ENCODE measurements at regions of chr1 and their contacts with region 1.

Region 1: DNA sequence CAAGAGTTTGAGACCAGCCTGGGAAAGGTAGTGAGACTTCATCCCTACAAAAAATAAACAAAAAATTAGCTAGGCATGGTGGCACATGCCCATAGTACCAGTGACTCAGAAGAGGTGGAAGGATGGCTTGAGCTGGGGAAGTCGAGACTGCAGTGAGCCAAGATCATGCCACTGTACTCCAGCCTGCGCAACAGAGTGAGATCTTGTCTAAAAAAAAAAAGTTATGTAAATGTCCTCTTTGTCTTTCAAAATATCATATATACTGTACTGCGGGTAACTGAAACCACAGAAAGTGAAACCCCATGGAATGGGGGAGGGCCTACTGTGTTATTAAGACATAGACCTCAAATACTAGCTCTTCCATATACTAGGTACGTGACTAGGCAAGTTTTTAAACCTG is 20.8 kb downstream of the ACADM start:
- DNase-seq: no peak
- ATAC-seq: peak; percentile 87
- H3K4me3 ChIP-seq: no peak overlapping the region
- H3K4me3 Mint-ChIP-seq: no peak overlapping the region
- H3K27ac ChIP-seq: no peak overlapping the region
- H3K27ac Mint-ChIP-seq: peak overlapping the region in 2 of 9 donors; percentile 28 to 41
- H3K4me1 ChIP-seq: no peaks in the 10 kb centered on the region
- H3K4me1 Mint-ChIP-seq: peaks cover 0 to 6% (median 0%) of the 10 kb centered on the region in 7 donors
- H3K27me3 ChIP-seq: no peaks in the 10 kb centered on the region
- H3K27me3 Mint-ChIP-seq: no peaks in the 10 kb centered on the region

Region 2: DNA sequence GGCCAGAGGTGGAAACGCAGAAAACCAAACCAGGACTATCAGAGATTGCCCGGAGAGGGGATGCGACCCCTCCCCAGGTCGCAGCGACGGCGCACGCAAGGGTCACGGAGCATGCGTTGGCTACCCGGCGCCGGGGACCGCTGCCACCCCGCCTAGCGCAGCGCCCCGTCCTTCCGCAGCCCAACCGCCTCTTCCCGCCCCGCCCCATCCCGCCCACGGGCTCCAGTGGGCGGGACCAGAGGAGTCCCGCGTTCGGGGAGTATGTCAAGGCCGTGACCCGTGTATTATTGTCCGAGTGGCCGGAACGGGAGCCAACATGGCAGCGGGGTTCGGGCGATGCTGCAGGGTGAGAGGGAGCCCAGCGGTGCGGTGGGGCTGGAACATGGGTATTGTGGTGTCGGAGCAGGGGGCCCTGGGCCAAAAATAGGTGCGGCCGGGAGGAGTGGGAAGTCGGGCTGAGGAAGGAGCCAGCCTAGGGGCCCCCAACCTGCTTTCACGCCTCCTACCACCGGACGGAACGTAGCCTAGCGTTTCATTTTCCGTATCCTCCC is 20.7 kb before region 1 on chr1 and contains the start of gene ACADM:
- CTCF ChIA-PET with region 1: no interaction called
- POLR2A ChIA-PET with region 1: no interaction called
- intact Hi-C with region 1: loop called in 1 of 2 experiments (anchors 2 kb)
- DNase-seq: peak; percentile 68 to 93 (median 79)
- ATAC-seq: peak; percentile 98
- H3K4me3 ChIP-seq: peak within 1 kb of the TSS; percentile 92
- H3K4me3 Mint-ChIP-seq: peak within 1 kb of the TSS; percentile 94 to 100 (median 98)
- H3K27ac ChIP-seq: peak within 1 kb of the TSS; percentile 89
- H3K27ac Mint-ChIP-seq: peak within 1 kb of the TSS; percentile 92 to 99 (median 97)
- H3K4me1 ChIP-seq: peaks cover 5 to 12% of the 10 kb centered on the region in 2 donors
- H3K4me1 Mint-ChIP-seq: peaks cover 29 to 75% (median 64%) of the 10 kb centered on the region in 7 donors
- H3K27me3 ChIP-seq: no peaks in the 10 kb centered on the region
- H3K27me3 Mint-ChIP-seq: peaks cover 0 to 2% (median 0%) of the 10 kb centered on the region in 5 donors
- total RNA-seq, gene ACADM: 11.1 to 36.4 (median 32.9) TPM

Region 3: GRCh38 chr1:75733661-75734060 is 11.6 kb before region 1 on chr1:
- CTCF ChIA-PET with region 1: no interaction called
- POLR2A ChIA-PET with region 1: no interaction called
- intact Hi-C with region 1: loop called in 1 of 2 experiments (anchors 1 kb)
- DNase-seq: no peak
- ATAC-seq: no peak
- H3K4me3 ChIP-seq: no peak overlapping the region
- H3K4me3 Mint-ChIP-seq: no peak overlapping the region
- H3K27ac ChIP-seq: no peak overlapping the region
- H3K27ac Mint-ChIP-seq: peak overlapping the region in 1 of 9 donors; percentile 9
- H3K4me1 ChIP-seq: no peaks in the 10 kb centered on the region
- H3K4me1 Mint-ChIP-seq: peaks cover 0 to 9% (median 4%) of the 10 kb centered on the region in 7 donors
- H3K27me3 ChIP-seq: no peaks in the 10 kb centered on the region
- H3K27me3 Mint-ChIP-seq: no peaks in the 10 kb centered on the region

Region 4: DNA sequence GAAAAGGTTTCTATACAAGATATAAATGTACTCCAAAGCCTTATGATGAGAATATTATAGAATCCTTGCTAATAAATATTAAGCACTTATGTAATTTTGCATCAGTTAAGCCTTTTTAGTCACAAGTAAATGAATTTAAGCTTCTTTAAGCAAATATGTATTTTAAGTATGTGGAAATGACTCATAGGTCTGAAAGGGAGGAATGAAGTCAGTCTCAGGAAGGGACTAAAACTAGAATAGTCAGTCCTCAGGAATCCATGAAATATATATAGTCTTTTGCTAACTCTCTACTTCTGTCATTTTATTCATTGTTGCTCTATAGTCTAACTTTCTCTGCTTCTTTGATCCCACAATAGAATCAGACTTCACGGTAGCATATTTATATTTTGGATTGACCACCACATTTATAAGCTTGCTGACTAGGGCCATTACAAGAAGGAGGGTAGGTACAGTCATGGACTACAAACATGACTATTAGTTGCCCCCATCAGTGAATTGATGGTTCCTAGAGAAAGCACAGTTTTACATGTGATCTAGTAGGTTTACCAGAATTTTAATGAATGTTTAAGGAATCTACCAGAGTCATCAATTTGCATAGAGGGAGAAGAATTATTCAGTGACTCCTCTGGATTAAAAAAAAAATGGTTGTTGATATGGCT is 20.6 kb after region 1 on chr1:
- CTCF ChIA-PET with region 1: no interaction called
- POLR2A ChIA-PET with region 1: no interaction called
- intact Hi-C with region 1: no loop called
- DNase-seq: no peak
- ATAC-seq: no peak
- H3K4me3 ChIP-seq: no peak overlapping the region
- H3K4me3 Mint-ChIP-seq: no peak overlapping the region
- H3K27ac ChIP-seq: no peak overlapping the region
- H3K27ac Mint-ChIP-seq: peak overlapping the region in 1 of 9 donors; percentile 32
- H3K4me1 ChIP-seq: no peaks in the 10 kb centered on the region
- H3K4me1 Mint-ChIP-seq: no peaks in the 10 kb centered on the region
- H3K27me3 ChIP-seq: no peaks in the 10 kb centered on the region
- H3K27me3 Mint-ChIP-seq: no peaks in the 10 kb centered on the region

Measured in naive thymus-derived CD4-positive, alpha-beta T cell (primary cell).